OCI-LY7 (cell line): ENCODE measurements at regions of chr11 and their contacts with region 1.

Region 1: GRCh38 chr11:85316967-85317366 is 310.2 kb downstream of the DLG2 start:
- DNase-seq: peak; percentile 87
- H3K4me3 ChIP-seq: peak overlapping the region; percentile 55
- H3K27ac ChIP-seq: peak overlapping the region; percentile 88
- H3K4me1 ChIP-seq: peaks cover 47% of the 10 kb centered on the region
- CTCF ChIP-seq: no peak

Region 2: DNA sequence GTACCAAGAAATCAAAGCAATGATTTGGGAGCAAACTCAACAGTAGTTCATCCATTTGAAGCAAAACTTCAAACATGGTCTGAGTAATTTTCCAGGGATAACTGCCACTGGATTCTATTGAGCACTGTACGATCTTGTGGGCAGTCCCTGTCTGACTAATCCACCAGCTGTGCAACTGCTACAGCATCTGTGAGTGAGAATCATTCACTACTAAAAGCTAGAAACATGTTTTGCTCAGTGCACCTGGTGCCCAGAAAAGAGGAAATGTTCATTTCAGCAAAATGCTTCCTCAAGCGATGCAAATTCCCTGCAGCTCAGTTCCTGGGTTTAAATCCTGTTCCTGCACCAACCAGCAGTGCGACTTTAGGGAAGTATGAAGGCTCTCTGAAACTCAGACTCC is 767.8 kb before region 1 on chr11:
- CTCF ChIA-PET with region 1: no interaction called
- POLR2A ChIA-PET with region 1: no interaction called
- intact Hi-C with region 1: loop called (anchors 5 kb)
- DNase-seq: peak; percentile 95
- H3K4me3 ChIP-seq: peak overlapping the region; percentile 50
- H3K27ac ChIP-seq: peak overlapping the region; percentile 95
- H3K4me1 ChIP-seq: peaks cover 35% of the 10 kb centered on the region
- CTCF ChIP-seq: no peak

Region 3: GRCh38 chr11:85109141-85109540 is 207.8 kb before region 1 on chr11:
- CTCF ChIA-PET with region 1: no interaction called
- POLR2A ChIA-PET with region 1: no interaction called
- intact Hi-C with region 1: loop called (anchors 5 kb)
- DNase-seq: peak; percentile 4
- H3K4me3 ChIP-seq: peak overlapping the region; percentile 25
- H3K27ac ChIP-seq: no peak overlapping the region
- H3K4me1 ChIP-seq: peaks cover 44% of the 10 kb centered on the region
- CTCF ChIP-seq: no peak